Activated CD4-positive, alpha-beta T cell treated with anti-CD3 and anti-CD28 coated beads, Interleukin-2, amount 10 ng/mL, durations not matched to agents 7 days and 5 days (primary cell): ENCODE measurements at regions of chr21 and their contacts with region 1.

Region 1: DNA sequence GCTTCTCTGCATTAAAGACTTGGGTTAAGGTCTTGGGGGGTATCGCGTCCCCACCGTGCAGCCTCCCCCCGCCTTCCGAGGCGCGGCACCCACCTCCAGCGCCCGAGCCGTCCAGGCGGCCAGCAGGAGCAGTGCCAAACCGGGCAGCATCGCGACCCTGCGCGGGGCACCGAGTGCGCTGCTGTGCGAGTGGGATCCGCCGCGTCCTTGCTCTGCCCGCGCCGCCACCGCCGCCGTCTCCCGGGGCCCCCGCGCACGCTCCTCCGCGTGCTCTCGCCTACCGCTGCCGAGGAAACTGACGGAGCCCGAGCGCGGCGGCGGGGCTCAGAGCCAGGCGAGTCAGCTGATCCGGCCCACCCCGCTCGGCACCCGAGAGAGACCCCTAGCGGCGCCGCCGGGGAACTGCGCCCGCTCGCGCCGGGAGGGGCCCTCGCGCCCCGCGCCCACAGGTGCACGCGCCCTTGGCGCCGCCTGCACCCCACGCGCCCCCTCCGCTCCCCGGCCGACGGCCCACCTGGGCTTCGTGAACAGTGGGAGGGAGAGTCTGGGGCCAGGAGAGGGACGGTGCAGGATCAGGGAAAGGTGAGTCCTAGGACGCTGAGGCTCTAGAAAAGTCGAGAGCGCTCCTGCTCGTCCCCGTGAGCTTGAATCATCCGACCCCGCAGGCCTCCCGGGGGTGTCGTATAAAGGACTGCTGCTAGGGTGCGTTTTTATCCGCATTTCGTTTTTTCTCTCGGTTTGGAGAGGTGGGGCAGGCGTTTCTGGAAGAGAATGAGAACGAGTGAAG is at the start of gene APP:
- DNase-seq: peak; percentile 85
- H3K4me3 Mint-ChIP-seq: peak within 1 kb of the TSS; percentile 88
- H3K27ac Mint-ChIP-seq: peak within 1 kb of the TSS; percentile 91
- H3K4me1 Mint-ChIP-seq: peaks cover 26% of the 10 kb centered on the region
- H3K27me3 Mint-ChIP-seq: peaks cover 1% of the 10 kb centered on the region
- total RNA-seq, gene APP: 31.0 to 31.4 TPM

Region 2: GRCh38 chr21:25895565-25896205 is 275.0 kb before region 1 on chr21:
- CTCF ChIA-PET with region 1: interaction called, 17 read pairs
- POLR2A ChIA-PET with region 1: no interaction called
- DNase-seq: peak; percentile 32
- H3K4me3 Mint-ChIP-seq: no peak overlapping the region
- H3K27ac Mint-ChIP-seq: no peak overlapping the region
- H3K4me1 Mint-ChIP-seq: peaks cover 22% of the 10 kb centered on the region
- H3K27me3 Mint-ChIP-seq: no peaks in the 10 kb centered on the region

Region 3: DNA sequence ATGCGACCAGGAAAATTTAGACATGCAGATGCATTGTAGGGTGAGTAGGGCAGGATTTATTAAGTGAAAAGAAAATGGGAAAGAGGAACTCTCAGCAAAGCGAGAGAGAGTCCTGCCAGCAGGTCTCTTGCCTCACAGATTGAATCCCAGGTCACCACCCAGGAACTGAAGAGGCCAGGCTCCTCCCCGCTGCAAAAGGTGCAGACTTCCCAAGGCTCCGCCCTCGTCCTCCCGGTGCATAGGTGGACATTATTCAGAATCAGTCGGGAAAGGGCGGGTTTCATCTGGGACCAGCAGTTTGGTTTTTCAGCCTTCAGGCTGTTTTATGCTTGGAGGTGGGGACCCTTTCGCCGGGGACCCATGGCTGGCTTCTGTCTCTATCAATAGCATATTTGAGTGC is 41.5 kb after region 1 on chr21:
- CTCF ChIA-PET with region 1: no interaction called
- POLR2A ChIA-PET with region 1: no interaction called
- DNase-seq: no peak
- H3K4me3 Mint-ChIP-seq: no peak overlapping the region
- H3K27ac Mint-ChIP-seq: no peak overlapping the region
- H3K4me1 Mint-ChIP-seq: no peaks in the 10 kb centered on the region
- H3K27me3 Mint-ChIP-seq: no peaks in the 10 kb centered on the region

Region 4: GRCh38 chr21:26332867-26333266 is 162.2 kb after region 1 on chr21:
- CTCF ChIA-PET with region 1: no interaction called
- POLR2A ChIA-PET with region 1: no interaction called
- DNase-seq: no peak
- H3K4me3 Mint-ChIP-seq: no peak overlapping the region
- H3K27ac Mint-ChIP-seq: no peak overlapping the region
- H3K4me1 Mint-ChIP-seq: no peaks in the 10 kb centered on the region
- H3K27me3 Mint-ChIP-seq: peaks cover 2% of the 10 kb centered on the region

Region 5: GRCh38 chr21:26365849-26366248 is 195.2 kb after region 1 on chr21:
- CTCF ChIA-PET with region 1: no interaction called
- POLR2A ChIA-PET with region 1: no interaction called
- DNase-seq: no peak
- H3K4me3 Mint-ChIP-seq: no peak overlapping the region
- H3K27ac Mint-ChIP-seq: no peak overlapping the region
- H3K4me1 Mint-ChIP-seq: no peaks in the 10 kb centered on the region
- H3K27me3 Mint-ChIP-seq: no peaks in the 10 kb centered on the region

Region 6: DNA sequence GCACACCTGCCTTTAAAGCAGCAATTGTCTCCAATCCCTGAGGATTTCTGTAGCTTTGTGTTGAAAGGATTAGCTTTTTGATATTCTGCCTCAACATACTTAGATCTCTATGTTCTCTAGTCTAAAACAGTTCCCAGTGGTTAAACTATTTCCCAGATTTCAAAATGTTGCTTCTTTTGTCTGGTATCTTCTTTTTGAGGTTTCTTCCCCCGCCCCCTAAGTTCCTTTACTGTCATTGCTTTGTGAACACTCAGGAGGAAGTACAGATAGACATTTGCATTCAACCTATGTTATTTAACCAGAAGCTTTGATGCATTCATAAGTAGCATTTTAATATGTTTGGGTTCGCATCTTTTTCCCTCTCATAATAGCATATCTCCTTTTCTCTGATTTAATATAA is 368.9 kb after region 1 on chr21:
- CTCF ChIA-PET with region 1: no interaction called
- POLR2A ChIA-PET with region 1: no interaction called
- DNase-seq: no peak
- H3K4me3 Mint-ChIP-seq: no peak overlapping the region
- H3K27ac Mint-ChIP-seq: no peak overlapping the region
- H3K4me1 Mint-ChIP-seq: no peaks in the 10 kb centered on the region
- H3K27me3 Mint-ChIP-seq: peaks cover 2% of the 10 kb centered on the region